ENCODE measurements at regions of chr3 and their contacts with region 1.

Region 1: DNA sequence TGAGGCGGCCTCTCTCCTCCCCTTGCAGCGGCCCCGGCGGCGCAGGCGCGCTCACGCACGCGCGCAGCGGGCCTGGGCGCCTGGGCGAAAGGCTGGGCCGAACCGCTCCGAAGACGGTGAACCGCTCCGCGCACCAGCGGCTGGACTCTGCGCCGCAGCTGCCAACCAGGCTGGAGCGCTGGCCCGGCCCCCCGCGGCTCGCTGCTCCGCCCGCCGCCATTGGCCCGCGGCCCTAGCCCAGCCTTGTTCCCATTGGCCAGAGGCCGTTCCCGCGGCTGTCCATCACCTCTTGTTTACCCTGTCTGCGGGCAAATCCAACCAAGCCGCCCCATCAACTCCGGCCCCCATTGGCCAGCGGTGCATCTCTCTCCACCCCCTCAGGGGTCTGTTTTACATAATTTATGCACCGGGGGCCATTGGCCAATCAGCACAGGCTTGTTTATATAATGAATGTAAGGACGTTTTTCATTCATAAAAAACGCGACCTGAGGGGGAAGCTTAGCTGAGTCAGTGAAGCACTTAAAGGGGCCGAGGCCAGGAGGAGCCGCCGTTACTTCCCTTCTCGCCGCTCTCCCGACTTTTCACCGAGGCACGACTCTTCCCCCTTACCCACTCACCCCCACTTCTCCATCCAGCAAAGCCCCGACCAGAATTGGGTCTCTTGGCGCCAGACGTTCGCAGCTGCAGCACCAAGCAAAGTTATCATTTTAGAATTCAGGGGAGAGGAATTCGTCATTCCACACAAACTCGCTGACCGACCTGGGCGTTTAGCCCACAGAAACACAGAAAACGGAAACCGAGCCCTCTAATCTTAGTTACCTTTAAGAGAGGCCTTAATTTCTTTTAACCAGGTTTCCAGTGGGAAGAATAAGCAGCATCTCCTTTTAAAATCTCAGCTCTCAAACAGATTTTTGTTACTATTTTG is at the start of gene ETV5:
- DNase-seq: peak; percentile 98 to 100 (median 100)

Region 2: DNA sequence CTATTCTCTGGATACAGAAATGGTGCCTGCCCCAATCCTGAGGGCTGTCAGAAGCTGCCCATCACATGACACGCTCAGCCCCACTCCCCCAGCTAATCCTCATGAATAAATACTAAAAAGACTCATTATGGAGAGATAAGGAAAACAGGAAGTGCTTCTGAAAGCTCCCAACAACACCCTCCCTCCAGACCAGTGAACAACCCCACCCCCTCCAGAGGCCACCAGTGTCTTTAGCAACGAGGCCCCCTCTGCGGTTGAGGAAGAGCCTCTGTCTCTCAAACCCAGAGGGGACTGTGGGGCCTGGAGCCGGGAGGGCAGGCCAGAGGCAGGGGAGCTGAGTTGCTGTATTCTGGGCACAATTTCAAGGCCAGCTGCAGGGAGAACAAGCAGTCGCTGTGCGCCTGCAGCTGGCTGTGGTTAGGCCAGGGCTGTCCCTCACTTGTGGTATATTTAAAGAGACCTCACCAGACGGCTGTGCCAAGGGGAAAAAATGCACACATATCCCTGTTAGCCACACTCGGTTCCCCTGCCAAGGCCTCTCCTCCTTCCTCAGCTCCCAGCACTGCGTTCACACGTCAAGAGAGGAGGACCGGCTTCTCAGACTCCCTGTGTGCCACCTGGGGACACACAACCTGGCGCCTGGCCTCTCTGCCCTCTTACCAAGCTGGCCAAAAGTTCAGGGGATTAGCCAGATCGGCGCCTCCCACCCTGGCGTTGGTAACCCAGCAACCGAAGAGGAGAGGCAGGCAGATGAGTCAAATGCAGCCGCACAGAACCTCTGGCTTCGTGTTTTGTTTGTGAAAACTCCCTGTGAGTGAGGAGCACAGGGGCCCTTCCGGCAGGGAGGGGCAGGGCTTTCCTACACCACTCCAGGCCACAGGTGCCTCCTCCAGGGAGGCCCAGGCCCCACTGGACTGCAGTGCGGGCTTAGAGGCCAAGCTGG is 100.9 kb after region 1 on chr3:
- intact Hi-C with region 1: loop called (anchors 5 kb)
- DNase-seq: peak; percentile 70 to 97 (median 90)

Region 3: GRCh38 chr3:186220911-186221645 is 111.9 kb after region 1 on chr3:
- intact Hi-C with region 1: loop called (anchors 5 kb)
- DNase-seq: peak in 41 of 42 donors; percentile 39 to 87 (median 70)

Region 4: DNA sequence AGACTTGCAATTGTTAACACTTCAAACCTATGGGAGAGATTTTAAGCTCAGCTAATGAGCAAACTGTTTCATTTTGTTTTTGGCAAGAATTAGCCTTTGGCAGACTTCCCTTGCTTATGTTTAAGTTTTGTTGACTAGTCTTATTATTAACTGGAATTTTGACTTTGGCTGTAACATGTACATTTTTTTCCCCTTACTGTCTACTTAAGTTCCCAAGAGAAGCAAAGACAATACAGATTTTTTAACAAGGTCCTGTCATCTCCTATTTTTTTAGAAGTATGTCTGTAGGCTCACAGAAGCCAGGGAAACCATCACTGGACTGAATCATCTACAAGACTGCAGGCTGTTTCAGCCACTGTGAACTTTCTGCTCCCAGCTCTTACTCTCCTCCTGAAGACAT is 178.5 kb after region 1 on chr3:
- intact Hi-C with region 1: no loop called
- DNase-seq: no peak

Measured in head of caudate nucleus (tissue), 42 donors.